B cell (primary cell): ENCODE measurements at regions of chr1 and their contacts with region 1.

Region 1: DNA sequence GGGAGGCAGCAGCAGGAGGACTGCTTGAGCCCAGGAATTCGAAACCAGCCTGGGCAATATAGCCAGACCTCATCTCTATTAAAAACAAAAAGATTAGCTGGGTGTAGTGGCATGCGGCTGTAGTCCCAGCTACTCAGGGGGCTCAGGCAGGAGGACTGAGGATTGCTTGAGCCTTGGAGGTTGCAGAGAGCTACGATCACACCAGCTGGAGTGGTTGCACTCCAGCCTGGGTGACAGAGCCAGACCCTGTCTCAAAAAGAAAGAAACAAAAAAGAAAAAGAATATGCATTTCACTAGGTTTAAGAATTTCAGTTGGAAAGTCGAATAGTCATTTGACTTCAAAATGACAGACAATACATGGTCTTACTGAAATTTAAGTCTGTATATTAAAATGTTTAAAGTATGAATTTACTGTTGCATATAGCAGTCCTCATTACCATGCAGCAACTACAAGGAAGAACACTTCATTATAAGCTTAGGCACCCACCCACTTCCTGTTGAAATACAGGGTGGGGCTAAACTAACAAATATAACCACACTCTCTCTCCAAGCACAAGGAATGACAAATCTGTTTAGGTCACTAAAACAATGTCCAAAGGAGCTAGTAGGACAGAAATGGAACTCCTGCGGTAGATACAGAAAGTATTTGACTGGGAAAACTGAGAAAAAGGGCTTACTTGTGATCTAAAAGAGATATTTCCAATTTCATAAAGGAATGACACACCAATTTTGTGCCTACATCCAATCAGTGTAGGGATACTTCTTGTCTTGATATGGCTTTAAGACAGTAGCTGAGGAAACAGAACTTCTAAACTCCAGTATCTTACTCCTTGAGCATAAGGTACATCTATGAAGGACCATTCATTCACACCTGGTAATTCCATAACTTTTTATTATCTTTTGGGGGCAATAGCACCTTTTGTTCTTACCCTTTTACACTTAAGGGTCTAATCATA is 44.1 kb downstream of the GPR3 start:
- DNase-seq: peak; percentile 50
- ATAC-seq: peak; percentile 55
- H3K4me3 ChIP-seq: peak overlapping the region; percentile 9 to 68 (median 34)
- H3K4me3 Mint-ChIP-seq: peak overlapping the region; percentile 84
- H3K27ac ChIP-seq: peak overlapping the region; percentile 71 to 83
- H3K27ac Mint-ChIP-seq: peak overlapping the region; percentile 86
- H3K4me1 ChIP-seq: peaks cover 76 to 78% of the 10 kb centered on the region in 2 donors
- H3K4me1 Mint-ChIP-seq: peaks cover 78% of the 10 kb centered on the region
- H3K27me3 ChIP-seq: no peaks in the 10 kb centered on the region
- H3K27me3 Mint-ChIP-seq: no peaks in the 10 kb centered on the region
- CTCF ChIP-seq: no peak

Region 2: GRCh38 chr1:27349784-27350662 is 86.5 kb before region 1 on chr1:
- CTCF ChIA-PET with region 1: no interaction called
- POLR2A ChIA-PET with region 1: no interaction called
- intact Hi-C with region 1: no loop called
- DNase-seq: no peak
- ATAC-seq: peak; percentile 65
- H3K4me3 ChIP-seq: peak overlapping the region in 3 of 5 experiments; percentile 24 to 41 (median 27)
- H3K4me3 Mint-ChIP-seq: peak overlapping the region; percentile 50
- H3K27ac ChIP-seq: no peak overlapping the region
- H3K27ac Mint-ChIP-seq: no peak overlapping the region
- H3K4me1 ChIP-seq: peaks cover 6 to 13% of the 10 kb centered on the region in 2 donors
- H3K4me1 Mint-ChIP-seq: peaks cover 18% of the 10 kb centered on the region
- H3K27me3 ChIP-seq: no peaks in the 10 kb centered on the region
- H3K27me3 Mint-ChIP-seq: no peaks in the 10 kb centered on the region
- CTCF ChIP-seq: no peak

Region 3: DNA sequence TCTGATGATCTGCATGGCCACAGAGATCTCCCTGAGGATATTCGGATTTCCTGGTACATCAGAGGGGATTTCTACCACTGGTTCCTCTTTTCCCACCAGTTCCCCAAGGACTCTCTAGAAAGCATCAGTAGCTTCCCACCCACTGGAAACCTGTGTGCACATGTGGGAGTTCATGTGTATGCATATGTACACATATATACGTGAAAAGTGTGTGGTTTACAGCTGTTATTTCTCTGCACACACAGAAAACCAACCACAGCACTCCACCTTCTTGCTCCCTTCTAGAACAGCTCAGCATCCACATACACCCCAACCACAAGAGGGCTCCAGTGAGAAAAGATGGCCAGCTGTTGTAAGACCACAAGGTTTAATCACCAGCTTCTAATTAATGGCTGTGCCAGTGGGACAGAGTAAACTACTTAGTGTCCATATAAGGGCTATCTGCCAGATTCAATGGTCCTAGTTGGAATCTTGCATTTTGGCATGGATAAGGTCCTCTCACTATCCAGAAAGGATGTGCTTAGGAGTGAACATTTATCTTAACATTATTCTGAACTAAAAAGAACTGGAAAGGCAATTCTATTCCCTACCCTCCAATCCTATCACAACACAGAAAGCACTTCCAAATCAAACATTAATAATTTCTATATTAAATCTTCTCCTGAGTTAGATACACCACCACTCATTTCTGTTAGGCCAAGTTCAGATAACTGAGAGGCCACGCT is 19.9 kb before region 1 on chr1:
- CTCF ChIA-PET with region 1: interaction called, 29 read pairs
- POLR2A ChIA-PET with region 1: no interaction called
- intact Hi-C with region 1: loop called (anchors 2 kb)
- DNase-seq: peak; percentile 79
- ATAC-seq: peak; percentile 66
- H3K4me3 ChIP-seq: no peak overlapping the region
- H3K4me3 Mint-ChIP-seq: no peak overlapping the region
- H3K27ac ChIP-seq: peak overlapping the region; percentile 37 to 69
- H3K27ac Mint-ChIP-seq: peak overlapping the region; percentile 69
- H3K4me1 ChIP-seq: peaks cover 38 to 39% of the 10 kb centered on the region in 2 donors
- H3K4me1 Mint-ChIP-seq: peaks cover 41% of the 10 kb centered on the region
- H3K27me3 ChIP-seq: no peaks in the 10 kb centered on the region
- H3K27me3 Mint-ChIP-seq: no peaks in the 10 kb centered on the region
- CTCF ChIP-seq: peak; percentile 78

Region 4: DNA sequence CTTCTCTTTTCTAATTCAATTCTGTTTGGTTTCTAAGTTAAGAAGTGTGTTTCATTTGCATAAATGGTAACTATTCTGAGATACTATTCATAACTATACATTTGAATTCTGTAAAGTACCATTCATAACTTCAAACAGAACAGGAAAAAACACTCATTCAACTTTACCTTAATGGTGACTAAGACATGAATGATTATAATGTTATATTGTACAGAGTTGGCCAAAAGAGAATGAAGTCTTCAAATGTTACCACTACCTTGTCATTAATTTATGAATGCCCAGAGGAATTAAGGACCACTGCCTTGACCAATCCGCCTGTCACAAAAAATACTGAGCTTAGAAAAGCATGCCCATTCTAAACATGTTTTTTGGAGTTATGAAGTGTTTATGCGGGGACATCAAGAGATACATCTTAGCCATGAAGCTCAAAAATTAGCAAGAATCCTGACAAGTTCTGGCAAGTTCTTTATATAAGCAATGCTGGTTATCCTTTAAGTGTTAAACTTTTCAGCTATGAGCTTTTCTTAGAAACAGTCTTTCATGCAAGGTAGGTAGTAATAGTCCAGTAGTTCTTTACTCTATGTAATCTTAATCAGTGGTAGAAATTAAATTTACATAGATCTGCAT is 45.6 kb after region 1 on chr1:
- CTCF ChIA-PET with region 1: interaction called, 4 read pairs
- POLR2A ChIA-PET with region 1: no interaction called
- intact Hi-C with region 1: loop called (anchors 2 kb)
- DNase-seq: no peak
- ATAC-seq: no peak
- H3K4me3 ChIP-seq: peak overlapping the region in 1 of 5 experiments; percentile 0
- H3K4me3 Mint-ChIP-seq: peak overlapping the region; percentile 66
- H3K27ac ChIP-seq: peak overlapping the region; percentile 38 to 61
- H3K27ac Mint-ChIP-seq: peak overlapping the region; percentile 67
- H3K4me1 ChIP-seq: peaks cover 63 to 76% of the 10 kb centered on the region in 2 donors
- H3K4me1 Mint-ChIP-seq: peaks cover 66% of the 10 kb centered on the region
- H3K27me3 ChIP-seq: no peaks in the 10 kb centered on the region
- H3K27me3 Mint-ChIP-seq: no peaks in the 10 kb centered on the region
- CTCF ChIP-seq: no peak

Region 5: DNA sequence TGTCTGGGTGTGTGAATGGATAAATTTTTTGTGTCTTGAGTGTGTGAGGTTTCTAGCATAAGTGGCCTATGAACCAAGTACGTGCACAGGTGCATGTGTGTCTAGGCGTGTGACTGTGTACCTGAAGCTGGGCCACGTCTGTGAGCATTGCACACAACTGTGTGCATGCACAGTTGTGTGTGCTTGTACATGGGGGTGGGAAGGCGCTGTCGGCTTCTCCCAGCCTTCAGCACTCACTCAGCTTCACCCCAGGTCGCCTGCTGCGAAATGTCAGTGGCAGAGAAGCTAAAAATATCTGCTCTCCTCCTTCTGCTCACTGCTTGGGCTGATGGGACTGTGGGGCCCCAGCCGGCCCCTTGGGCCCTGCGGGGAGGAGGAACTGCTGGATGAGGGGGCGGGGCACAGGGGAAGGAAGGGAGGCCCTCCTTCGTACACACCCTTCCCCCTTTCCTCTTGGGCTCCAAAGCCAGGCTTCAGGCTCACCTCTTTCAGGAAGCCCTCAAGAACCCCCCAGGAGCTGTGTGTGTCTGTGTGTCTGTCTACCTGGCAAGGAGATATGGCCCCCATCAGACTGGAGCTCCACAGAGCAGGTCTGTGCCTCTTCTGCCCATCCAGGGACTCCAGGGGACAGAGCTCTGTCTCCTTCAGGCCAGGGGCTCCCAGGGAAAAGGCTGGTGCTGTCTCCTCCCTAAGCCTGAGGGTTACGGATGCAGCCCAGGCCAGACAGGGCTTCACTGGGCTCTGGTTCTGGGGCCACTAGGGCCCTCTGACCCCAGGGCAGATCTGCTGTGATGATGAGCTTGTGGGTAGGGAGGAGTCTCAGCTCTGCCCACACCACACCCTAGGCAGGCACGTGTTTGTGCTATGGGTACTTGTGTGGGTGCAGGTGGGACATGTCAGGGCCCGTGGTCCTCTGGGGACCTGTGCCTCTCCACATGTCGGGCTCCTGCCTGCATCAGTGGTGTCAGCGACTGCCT is 89.1 kb after region 1 on chr1:
- CTCF ChIA-PET with region 1: interaction called, 3 read pairs
- POLR2A ChIA-PET with region 1: interaction called, 3 read pairs
- intact Hi-C with region 1: loop called (anchors 1 kb)
- DNase-seq: peak; percentile 82
- ATAC-seq: peak; percentile 71
- H3K4me3 ChIP-seq: peak overlapping the region in 4 of 5 experiments; percentile 2 to 27 (median 16)
- H3K4me3 Mint-ChIP-seq: peak overlapping the region; percentile 69
- H3K27ac ChIP-seq: peak overlapping the region; percentile 83 to 88
- H3K27ac Mint-ChIP-seq: peak overlapping the region; percentile 87
- H3K4me1 ChIP-seq: peaks cover 67 to 69% of the 10 kb centered on the region in 2 donors
- H3K4me1 Mint-ChIP-seq: peaks cover 75% of the 10 kb centered on the region
- H3K27me3 ChIP-seq: peaks cover 0 to 4% (median 0%) of the 10 kb centered on the region in 4 experiments
- H3K27me3 Mint-ChIP-seq: no peaks in the 10 kb centered on the region
- CTCF ChIP-seq: no peak

Region 6: DNA sequence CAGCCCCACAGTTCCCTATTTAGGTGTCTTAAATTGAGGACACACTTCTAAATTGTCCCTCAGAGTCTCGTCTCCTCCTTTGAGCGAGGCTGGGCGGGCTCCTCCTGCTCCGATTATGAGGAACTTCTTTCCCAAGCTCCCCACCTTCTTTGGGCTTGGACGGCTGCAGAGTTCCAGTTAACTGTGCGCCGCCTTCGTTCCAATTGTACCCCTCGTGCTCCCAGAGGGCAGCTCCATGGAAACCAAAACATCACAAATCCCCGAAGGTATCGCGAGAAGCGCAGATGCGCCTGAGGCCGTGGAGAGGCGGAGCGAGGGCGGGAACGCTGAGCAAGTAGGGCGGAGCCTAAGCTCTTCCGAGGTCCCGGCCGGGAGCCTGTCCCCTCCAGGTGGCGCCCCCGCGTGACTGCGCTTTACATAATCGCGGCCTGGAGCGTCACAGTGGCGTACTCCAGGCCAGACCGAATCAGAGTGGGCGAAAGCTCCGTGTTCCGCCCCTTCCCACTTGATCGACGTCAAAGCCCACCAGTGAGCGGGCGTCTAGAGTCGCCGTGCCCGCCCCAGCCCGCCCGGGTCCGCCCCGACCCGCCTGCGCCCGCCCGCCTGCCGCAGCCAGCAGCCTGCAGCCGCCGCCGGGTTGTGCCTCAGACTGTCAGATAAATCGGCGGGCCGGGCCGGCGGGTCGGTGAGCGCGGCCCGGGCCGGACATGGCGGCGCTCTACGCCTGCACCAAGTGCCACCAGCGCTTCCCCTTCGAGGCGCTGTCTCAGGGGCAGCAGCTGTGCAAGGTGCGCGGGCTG is 289.1 kb after region 1 on chr1 and contains the start of gene FAM76A:
- CTCF ChIA-PET with region 1: no interaction called
- POLR2A ChIA-PET with region 1: no interaction called
- intact Hi-C with region 1: no loop called
- DNase-seq: peak; percentile 100
- ATAC-seq: peak; percentile 91
- H3K4me3 ChIP-seq: peak within 1 kb of the TSS; percentile 68 to 94 (median 74)
- H3K4me3 Mint-ChIP-seq: peak within 1 kb of the TSS; percentile 94
- H3K27ac ChIP-seq: peak within 1 kb of the TSS; percentile 96 to 98
- H3K27ac Mint-ChIP-seq: peak within 1 kb of the TSS; percentile 98
- H3K4me1 ChIP-seq: peaks cover 17% of the 10 kb centered on the region in 2 donors
- H3K4me1 Mint-ChIP-seq: peaks cover 25% of the 10 kb centered on the region
- H3K27me3 ChIP-seq: no peaks in the 10 kb centered on the region
- H3K27me3 Mint-ChIP-seq: no peaks in the 10 kb centered on the region
- CTCF ChIP-seq: peak; percentile 27
- total RNA-seq, gene FAM76A: 25.0 and 28.5 TPM in 2 replicates